Caco-2 (cell line): ENCODE measurements at regions of chr7 and their contacts with region 1.

Region 1: DNA sequence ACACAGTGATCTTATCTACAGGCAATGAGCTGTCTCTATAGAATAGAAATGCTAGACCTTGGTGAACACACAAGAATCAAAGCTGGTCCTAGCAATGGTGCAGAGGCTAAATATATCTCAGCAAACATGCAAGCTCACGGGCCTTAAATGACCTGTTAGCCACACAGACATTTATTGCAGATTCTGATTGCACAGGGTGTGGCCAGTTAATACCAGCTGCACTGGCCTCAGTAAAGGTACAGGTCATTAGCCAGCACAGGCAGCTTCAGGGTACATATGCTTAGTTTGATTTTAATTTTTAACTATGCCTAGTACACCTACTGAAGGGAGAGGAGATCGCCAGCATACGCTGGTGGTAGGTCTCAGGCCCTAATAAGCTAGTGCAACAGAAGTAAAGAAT is 265.4 kb upstream of the DGKB start:
- DNase-seq: peak; percentile 34 to 60
- H3K4me3 ChIP-seq: no peak overlapping the region
- H3K4me3 Mint-ChIP-seq: no peak overlapping the region
- H3K27ac Mint-ChIP-seq: no peak overlapping the region
- H3K4me1 ChIP-seq: no peaks in the 10 kb centered on the region
- H3K4me1 Mint-ChIP-seq: no peaks in the 10 kb centered on the region
- H3K27me3 ChIP-seq: no peaks in the 10 kb centered on the region
- H3K27me3 Mint-ChIP-seq: no peaks in the 10 kb centered on the region
- CTCF ChIP-seq: no peak

Region 2: GRCh38 chr7:15130666-15131541 is 37.0 kb before region 1 on chr7:
- CTCF ChIA-PET with region 1: no interaction called
- POLR2A ChIA-PET with region 1: no interaction called
- intact Hi-C with region 1: loop called (anchors 2 kb)
- DNase-seq: no peak
- H3K4me3 ChIP-seq: no peak overlapping the region
- H3K4me3 Mint-ChIP-seq: no peak overlapping the region
- H3K27ac Mint-ChIP-seq: peak overlapping the region; percentile 28
- H3K4me1 ChIP-seq: peaks cover 41% of the 10 kb centered on the region
- H3K4me1 Mint-ChIP-seq: peaks cover 16% of the 10 kb centered on the region
- H3K27me3 ChIP-seq: no peaks in the 10 kb centered on the region
- H3K27me3 Mint-ChIP-seq: no peaks in the 10 kb centered on the region
- CTCF ChIP-seq: no peak